ENCODE measurements at regions of chr5 and their contacts with region 1.

Region 1: GRCh38 chr5:115586601-115587048 is 15.7 kb downstream of the TICAM2 start:
- H3K4me3 Mint-ChIP-seq: no peak overlapping the region
- H3K27ac Mint-ChIP-seq: no peak overlapping the region
- H3K4me1 Mint-ChIP-seq: peaks cover 20% of the 10 kb centered on the region
- H3K27me3 Mint-ChIP-seq: no peaks in the 10 kb centered on the region

Region 2: DNA sequence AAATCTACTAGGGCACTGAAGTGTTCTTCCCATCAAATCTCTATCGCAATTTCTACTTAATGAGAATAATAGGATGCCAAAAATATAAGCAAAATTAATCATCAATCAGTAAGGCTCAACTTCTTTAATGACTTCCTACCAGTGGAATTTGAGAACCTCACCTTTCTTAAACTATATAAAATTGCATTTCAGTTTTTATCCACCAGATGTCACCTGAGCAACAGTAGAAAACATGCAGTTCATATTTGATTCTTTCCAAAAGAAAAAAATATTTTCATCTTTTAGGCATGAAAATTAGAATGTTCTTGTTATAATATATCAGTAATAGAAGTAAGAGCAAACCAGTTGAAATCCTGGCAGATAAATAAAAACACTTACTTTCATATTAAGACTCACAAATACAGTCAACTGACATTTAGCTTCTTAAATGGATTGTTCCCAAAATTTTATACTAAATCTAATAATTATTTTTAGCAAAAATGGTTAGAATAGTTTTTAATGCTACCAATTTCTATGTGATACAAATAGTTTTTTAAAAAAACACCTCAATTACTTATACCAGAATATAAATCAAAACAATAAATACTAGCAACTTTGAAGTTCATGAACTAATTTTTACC is 276.8 kb before region 1 on chr5:
- intact Hi-C with region 1: loop called (anchors 1 kb)
- H3K4me3 Mint-ChIP-seq: no peak overlapping the region
- H3K27ac Mint-ChIP-seq: no peak overlapping the region
- H3K4me1 Mint-ChIP-seq: no peaks in the 10 kb centered on the region
- H3K27me3 Mint-ChIP-seq: peaks cover 17% of the 10 kb centered on the region

Region 3: DNA sequence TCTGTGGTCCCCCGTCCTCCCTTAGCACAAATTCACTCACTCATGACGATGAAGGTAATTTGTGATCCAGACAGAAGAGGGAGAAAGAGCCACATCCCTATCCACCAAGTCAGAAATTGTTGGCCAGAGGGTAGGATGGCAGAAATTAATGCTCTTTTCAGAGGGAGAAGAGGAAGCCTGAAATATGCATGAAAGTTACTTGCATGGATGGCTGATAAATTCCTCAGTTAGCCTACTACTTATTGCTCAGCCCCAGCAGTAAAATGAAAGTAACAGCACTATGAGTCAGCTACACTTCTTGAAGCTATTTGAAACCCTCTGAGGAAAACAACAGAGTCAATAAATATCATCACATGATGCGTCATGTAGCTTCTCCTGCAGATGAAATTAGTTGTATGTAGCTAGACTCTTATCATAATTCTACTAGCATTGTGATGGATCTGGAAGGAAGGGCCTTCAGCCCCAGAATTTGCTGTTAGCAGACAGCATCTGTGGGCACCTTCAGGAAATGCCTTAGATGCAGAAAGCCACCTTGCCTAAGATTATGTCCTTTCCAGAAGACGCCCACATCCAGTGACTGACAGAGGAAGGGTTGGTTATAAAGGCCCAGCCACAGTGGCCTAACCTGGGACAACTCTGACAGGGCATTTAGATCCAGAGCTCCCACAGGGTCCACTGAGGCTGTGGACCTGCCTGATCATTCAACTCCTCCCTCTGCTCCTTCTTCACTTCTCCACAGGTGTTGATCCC is 209.0 kb before region 1 on chr5:
- intact Hi-C with region 1: loop called (anchors 5 kb)
- H3K4me3 Mint-ChIP-seq: no peak overlapping the region
- H3K27ac Mint-ChIP-seq: no peak overlapping the region
- H3K4me1 Mint-ChIP-seq: peaks cover 16% of the 10 kb centered on the region
- H3K27me3 Mint-ChIP-seq: peaks cover 7% of the 10 kb centered on the region

Region 4: GRCh38 chr5:115907177-115907576 is 320.6 kb after region 1 on chr5:
- intact Hi-C with region 1: no loop called
- H3K4me3 Mint-ChIP-seq: no peak overlapping the region
- H3K27ac Mint-ChIP-seq: no peak overlapping the region
- H3K4me1 Mint-ChIP-seq: no peaks in the 10 kb centered on the region
- H3K27me3 Mint-ChIP-seq: no peaks in the 10 kb centered on the region

Measured in dendritic cell treated with granulocyte-macrophage colony-stimulating factor and Interleukin-4, amounts not matched to agents 40 ng/mL and 50 ng/mL, for 4 days (primary cell).